ENCODE measurements at regions of chr6 and their contacts with region 1.

Region 1: DNA sequence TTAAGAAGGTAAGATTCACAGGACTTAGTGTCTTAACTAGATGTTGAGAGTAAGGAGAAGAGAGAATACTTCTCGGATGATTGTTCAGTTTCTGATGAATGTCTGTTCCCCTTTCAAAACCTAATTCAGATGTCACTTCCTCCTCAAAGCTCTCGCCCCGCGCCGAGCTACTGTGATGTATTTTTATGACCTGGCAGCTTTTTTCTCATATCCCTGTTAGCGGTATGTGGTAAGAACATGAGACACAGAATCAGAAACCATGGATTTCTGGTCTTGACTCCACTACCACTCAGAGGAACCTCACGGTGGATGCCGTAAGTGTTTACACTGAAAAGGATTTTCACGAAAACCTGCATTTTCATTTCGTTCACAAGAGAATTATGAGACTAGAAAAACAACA is 48.4 kb downstream of the CEP43 start:
- DNase-seq: peak; percentile 89

Region 2: DNA sequence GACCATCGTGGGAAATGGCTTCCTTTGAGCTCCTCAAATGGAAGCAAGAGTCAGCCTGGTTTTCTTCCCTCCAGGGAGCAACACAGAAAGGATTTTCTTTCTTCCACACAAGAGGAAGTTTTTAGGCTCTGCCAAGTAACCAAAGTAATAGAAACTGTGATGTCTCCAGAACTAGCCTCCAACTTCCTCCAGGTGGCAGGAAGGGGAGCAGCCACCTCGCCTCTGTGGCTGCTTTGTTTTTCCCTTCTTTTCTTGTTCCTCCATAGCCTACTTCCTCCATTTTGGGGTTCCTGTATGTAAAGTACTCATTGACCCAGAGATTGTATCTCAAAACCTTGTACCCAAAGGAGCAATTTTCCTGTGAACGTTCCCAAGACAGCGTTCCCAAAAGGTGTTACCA is 42.6 kb after region 1 on chr6:
- intact Hi-C with region 1: no loop called
- DNase-seq: no peak

Region 3: DNA sequence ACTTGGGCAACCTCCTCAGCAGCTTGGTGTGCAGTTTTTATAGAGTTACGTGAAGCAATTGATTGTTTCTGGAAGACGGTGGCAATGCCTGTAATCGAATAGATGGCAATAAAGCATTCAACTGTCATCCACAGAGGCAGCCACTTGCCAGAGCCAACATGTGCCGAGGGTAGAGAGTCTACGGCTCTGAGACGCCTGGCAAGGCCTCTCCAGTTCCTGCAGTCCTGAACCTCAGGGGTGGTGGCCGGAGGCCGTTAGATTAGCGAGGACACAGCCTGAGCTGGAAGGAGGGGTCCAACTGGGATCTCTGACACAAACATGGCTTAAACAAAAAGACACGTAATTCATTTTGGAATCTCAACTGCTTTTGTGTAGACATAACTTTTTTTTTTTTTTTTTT is 276.6 kb after region 1 on chr6:
- intact Hi-C with region 1: loop called in 1 of 2 experiments (anchors 5 kb)
- DNase-seq: no peak

Measured in posterior vena cava (tissue), 2 donors.